Calu3 (cell line): ENCODE measurements at regions of chr20 and their contacts with region 1.

Region 1: DNA sequence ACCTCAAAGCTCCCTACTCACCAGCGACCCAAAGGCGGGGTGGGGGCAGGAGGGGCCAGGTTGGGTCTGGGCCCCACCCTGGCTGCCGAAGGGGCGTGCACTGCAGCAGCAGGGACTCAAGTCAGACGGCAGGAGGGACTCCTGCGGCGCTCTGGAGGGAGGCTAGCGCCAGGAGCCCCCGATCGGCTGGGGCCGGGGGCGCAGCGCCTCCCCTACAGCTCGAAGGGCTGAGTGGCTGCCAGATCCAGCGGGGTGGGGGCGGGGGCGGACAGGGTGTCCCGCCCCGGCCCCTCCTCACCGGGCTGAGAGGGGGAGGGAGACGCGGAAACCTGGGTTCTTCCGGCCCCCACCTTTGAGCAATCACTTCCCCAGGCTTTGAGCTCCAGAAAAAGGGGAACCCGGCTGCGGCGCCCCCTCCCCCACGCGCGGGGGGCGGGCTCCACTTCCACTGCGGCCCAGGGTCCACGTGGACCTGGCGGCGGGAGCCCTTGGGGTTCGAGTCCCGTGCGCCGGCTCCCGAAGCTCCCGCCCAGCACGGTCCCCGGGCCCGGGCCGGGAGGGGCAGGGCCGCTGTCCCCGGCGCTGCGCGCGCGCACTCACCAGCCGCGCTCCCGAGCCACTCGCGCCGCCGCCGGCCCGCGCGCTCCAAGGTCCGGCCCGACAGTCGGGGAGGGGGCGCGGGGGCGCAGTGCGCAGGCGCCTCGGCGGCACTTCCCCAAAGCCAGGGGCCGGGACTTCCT is at the start of gene RGS19:
- DNase-seq: peak; percentile 86
- H3K4me3 Mint-ChIP-seq: peak within 1 kb of the TSS; percentile 82
- H3K27ac Mint-ChIP-seq: peak within 1 kb of the TSS; percentile 68
- H3K4me1 Mint-ChIP-seq: peaks cover 32% of the 10 kb centered on the region
- H3K27me3 Mint-ChIP-seq: peaks cover 44% of the 10 kb centered on the region
- CTCF ChIP-seq: no peak
- total RNA-seq, gene RGS19: 17.2 and 17.8 TPM in 2 replicates

Region 2: DNA sequence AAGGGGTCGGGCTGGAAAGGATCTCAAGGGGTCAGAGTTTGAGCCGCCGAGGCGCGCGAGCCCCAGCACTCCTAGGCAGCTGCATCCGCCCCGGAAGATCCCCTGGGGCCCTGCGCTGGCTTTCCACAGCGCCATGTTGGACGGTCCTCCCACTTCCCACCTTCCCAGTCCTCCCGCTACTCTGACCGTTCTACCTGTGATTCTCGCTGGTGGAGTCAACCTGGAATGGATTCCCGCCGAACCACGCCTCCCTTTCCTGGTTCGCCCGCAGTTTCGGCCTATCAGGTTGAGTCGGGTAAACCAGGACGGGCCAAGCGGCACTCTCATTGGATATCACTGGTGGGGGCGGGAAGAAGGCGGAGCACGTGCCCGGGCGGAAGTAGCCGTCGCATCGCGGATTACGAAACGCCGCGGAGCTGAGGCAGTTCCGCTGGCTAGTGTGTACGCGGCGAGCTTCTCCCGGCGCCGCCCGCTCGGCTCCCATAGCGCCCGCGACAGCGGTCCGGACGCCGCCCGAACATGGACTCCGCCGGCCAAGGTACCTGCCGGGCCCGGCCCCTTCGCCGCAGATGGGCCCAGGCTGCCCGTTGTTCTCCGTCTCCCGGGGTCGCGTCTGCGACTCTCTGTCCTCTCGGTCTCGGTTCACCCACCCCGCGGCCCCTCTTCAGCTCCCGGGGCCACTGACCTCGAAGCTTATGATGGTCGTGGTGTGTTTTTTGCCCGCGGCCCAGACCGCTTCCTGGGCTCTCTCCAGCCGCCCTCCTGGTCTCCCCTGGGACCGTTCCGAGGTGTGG is 214.4 kb before region 1 on chr20 and contains the start of gene TPD52L2:
- CTCF ChIA-PET with region 1: no interaction called
- intact Hi-C with region 1: no loop called
- DNase-seq: peak; percentile 100
- H3K4me3 Mint-ChIP-seq: peak within 1 kb of the TSS; percentile 100
- H3K27ac Mint-ChIP-seq: peak within 1 kb of the TSS; percentile 92
- H3K4me1 Mint-ChIP-seq: peaks cover 19% of the 10 kb centered on the region
- H3K27me3 Mint-ChIP-seq: no peaks in the 10 kb centered on the region
- CTCF ChIP-seq: no peak
- total RNA-seq, gene TPD52L2: 192 and 197 TPM in 2 replicates

Region 3: GRCh38 chr20:64119681-64120341 is 40.4 kb after region 1 on chr20:
- CTCF ChIA-PET with region 1: interaction called, 11 read pairs
- intact Hi-C with region 1: loop called (anchors 5 kb)
- DNase-seq: no peak
- H3K4me3 Mint-ChIP-seq: peak overlapping the region; percentile 1
- H3K27ac Mint-ChIP-seq: no peak overlapping the region
- H3K4me1 Mint-ChIP-seq: peaks cover 8% of the 10 kb centered on the region
- H3K27me3 Mint-ChIP-seq: peaks cover 66% of the 10 kb centered on the region
- CTCF ChIP-seq: no peak

Region 4: DNA sequence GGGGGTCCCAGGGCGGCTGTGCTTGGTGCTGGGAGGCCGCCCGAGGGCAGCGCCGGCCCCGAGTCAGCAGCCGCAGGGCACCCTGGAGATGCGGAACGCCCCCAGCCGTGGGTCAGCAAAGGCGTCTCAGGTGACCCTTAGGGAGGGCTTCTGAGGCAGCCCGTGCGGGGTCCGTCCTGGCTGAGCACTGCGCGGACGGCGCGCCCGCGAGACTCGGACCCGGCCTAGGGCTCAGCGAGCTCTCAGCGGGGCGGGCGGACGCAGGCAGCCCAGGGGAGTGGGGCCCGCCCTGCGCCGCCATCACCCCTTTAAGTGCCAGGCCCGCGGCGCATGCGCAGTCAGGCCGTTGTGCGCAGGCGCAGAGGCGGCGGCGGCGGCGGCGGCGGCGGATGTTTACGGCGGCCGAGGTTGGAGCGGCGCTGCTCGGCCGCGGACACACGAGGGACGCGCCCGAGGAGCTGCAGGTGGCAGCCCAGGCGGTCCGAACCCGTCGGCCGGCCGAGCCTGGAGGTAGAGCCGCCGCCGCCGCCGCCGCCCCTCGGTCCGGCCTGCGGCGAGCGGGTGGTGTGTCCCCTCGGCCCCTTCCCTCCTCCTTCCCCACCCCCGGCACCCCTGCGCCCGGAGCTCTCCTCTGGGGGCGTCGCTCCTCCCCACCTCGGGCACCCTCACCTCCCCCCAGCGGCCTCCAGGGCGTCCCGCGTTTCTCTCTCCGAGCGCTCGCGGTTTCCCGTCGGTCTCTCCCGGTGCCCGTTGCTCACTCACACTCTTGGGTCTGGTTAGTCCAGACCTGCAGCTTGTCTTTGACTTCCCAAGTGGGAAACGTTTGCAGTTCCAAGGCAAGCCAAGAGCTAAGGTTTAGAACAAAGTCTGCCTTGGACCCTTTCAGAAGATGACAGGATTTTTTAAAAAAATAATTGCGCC is 176.2 kb after region 1 on chr20 and contains the start of gene PCMTD2:
- CTCF ChIA-PET with region 1: no interaction called
- intact Hi-C with region 1: no loop called
- DNase-seq: peak; percentile 95
- H3K4me3 Mint-ChIP-seq: peak within 1 kb of the TSS; percentile 99
- H3K27ac Mint-ChIP-seq: peak within 1 kb of the TSS; percentile 97
- H3K4me1 Mint-ChIP-seq: peaks cover 32% of the 10 kb centered on the region
- H3K27me3 Mint-ChIP-seq: peaks cover 29% of the 10 kb centered on the region
- CTCF ChIP-seq: no peak
- total RNA-seq, gene PCMTD2: 61.2 and 62.2 TPM in 2 replicates